ENCODE measurements at regions of chr5 and their contacts with region 1.

Region 1: DNA sequence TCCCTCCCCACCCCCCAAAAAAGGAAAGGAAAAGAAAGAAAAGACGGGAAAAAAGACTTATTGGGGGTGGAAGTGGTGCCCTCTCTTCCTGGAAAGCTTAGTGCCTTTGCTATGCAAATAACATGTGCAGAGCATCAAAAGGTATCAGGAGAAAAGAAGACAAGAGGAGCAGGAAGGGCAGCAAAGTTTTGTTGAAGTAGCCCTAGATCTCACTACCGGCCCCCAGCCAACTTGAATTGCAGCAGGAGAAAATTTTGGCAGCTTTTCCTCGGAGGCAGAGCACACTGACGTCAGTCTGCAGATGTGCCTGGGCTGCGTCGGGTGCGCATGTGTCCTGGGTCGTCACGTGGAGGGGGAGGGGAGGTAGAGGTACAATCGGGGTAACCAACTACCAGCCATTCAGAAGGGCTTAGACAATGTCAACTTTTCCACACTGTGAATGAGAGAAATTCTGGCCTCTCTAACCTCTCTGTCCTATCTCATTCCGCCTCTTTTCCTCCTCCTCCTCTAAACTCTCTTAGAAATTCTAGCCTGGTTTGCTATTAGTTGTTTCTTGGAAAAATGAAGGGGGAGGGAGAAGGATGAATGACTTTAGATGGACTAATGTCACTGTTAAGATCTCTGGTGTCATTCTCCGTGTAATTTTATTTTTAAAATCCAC is at the start of gene ADAMTS6:
- DNase-seq: peak; percentile 93 to 97 (median 96)
- H3K4me3 ChIP-seq: peak within 1 kb of the TSS; percentile 6 to 69 (median 48)
- H3K27ac ChIP-seq: peak within 1 kb of the TSS; percentile 81 to 94 (median 89)
- H3K4me1 ChIP-seq: peaks cover 5 to 26% of the 10 kb centered on the region in 2 donors
- H3K27me3 ChIP-seq: no peaks in the 10 kb centered on the region
- CTCF ChIP-seq: no peak
- POLR2A ChIP-seq: peak; percentile 8 to 88
- total RNA-seq, gene ADAMTS6: 0.54 to 11.9 (median 1.0) TPM

Region 2: DNA sequence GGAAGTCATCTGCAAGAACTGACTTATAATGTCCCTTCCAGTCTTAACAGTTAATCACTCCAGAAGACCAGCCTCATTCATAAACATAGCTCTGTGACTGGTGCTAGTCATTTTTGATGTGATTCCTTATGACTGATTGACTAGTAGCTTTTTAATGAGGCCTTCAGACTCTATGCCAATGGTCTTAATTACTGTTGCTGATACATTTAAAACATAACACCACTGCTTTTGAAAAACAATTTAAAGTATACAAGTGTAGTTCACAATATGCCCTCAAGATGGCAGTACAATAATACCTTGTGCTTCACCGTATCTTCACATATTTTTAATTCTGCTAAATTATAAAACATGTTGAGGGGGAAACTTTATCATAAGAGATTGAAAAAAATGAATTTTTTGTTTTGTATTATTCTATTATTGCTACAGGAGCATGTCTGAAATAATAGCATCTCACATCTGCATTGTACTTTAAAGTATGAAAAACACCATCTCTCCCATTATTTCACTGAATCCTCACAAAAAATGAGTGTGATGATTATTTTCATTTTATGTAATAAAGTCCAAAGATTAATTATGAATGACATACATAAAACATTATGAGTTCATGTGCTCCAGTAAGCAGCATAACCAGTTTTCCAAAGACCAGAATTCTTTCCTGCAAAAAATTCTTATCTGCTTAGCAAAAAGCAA is 846.6 kb before region 1 on chr5:
- intact Hi-C with region 1: loop called in 1 of 2 experiments (anchors 10 kb)
- DNase-seq: no peak
- H3K4me3 ChIP-seq: no peak overlapping the region
- H3K27ac ChIP-seq: no peak overlapping the region
- H3K4me1 ChIP-seq: no peaks in the 10 kb centered on the region
- H3K27me3 ChIP-seq: no peaks in the 10 kb centered on the region
- CTCF ChIP-seq: peak; percentile 68 to 91 (median 78)
- POLR2A ChIP-seq: no peak

Region 3: DNA sequence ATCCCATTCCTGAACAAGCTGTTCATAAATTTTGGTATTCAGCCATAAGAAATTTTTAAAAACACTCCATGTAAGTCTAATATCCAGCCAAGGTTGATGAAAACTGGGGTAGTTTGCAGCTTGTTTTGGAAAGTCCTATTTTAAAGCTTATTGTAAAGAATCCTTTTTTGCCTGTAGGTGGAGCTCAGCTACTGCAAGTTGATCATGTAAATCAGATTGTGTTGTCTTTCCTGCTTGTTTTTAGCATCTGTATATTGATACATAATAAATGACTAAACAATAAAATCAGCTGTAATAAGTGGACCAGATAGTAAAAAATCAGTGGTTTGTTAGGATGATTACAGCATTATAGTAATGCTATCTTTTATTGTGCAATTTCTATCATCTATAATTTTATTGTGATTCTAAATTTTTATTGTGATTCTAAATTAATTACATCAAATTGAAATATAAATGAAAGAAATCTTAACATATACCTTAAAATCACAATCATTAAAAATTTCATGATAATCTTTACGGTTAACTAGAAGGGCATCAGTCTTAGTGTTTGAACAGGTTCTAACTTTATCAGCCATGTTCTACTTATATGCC is 670.6 kb before region 1 on chr5:
- intact Hi-C with region 1: loop called in 1 of 2 experiments (anchors 5 kb)
- DNase-seq: peak in 3 of 7 donors; percentile 7 to 15 (median 8)
- H3K4me3 ChIP-seq: no peak overlapping the region
- H3K27ac ChIP-seq: no peak overlapping the region
- H3K4me1 ChIP-seq: no peaks in the 10 kb centered on the region
- H3K27me3 ChIP-seq: no peaks in the 10 kb centered on the region
- CTCF ChIP-seq: peak; percentile 51 to 78 (median 65)
- POLR2A ChIP-seq: no peak

Region 4: GRCh38 chr5:64958757-64959391 is 522.9 kb before region 1 on chr5:
- intact Hi-C with region 1: loop called (anchors 10 kb)
- DNase-seq: no peak
- H3K4me3 ChIP-seq: no peak overlapping the region
- H3K27ac ChIP-seq: no peak overlapping the region
- H3K4me1 ChIP-seq: no peaks in the 10 kb centered on the region
- H3K27me3 ChIP-seq: no peaks in the 10 kb centered on the region
- CTCF ChIP-seq: peak; percentile 42 to 65 (median 50)
- POLR2A ChIP-seq: no peak

Region 5: GRCh38 chr5:64965613-64966012 is 516.2 kb before region 1 on chr5:
- intact Hi-C with region 1: loop called in 1 of 2 experiments (anchors 10 kb)
- DNase-seq: no peak
- H3K4me3 ChIP-seq: no peak overlapping the region
- H3K27ac ChIP-seq: no peak overlapping the region
- H3K4me1 ChIP-seq: no peaks in the 10 kb centered on the region
- H3K27me3 ChIP-seq: no peaks in the 10 kb centered on the region
- CTCF ChIP-seq: no peak
- POLR2A ChIP-seq: no peak

Region 6: DNA sequence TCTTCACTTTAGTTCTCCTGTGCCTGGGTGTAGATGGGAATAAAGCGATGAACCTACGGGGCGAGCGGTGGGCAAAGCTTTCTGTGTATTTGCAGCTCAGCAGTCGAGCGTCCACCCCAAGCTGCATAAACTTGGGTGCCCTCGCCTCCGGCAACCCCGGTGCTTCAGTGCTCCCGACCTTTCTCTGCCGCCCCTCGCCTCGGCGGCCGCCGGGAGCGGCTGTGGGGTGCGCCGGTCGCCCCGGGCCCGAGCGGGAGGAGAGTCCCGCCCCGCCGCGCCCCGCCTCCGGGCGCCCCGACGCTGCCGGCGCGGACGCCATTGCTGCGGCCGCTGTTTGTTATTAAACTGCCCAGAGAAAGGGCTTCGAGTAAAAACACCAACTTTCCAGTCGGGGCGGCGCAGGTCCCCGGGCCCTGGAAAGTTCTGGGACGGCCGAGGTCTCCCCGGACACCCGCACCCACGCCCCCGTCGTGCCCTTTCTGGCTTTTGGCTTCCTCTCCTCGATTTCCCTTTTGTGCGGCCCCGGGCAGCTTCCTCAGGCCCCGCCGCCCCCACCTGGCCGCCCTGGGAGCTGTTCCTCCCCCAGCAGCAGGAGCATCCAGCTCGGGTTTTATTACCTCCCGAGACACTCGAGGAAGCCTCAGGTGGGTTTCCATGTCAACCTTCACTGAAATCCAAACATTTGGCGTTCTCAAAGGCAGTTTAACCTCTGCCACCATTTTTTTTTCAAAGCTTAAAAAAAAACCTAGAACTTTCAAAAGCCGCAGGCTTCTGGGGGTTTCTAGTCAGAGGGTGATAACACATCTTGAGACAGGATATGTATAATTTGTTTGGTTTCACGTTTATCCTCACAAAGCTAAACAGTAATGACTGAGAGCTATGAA is 378.7 kb before region 1 on chr5:
- intact Hi-C with region 1: loop called in 1 of 2 experiments (anchors 10 kb)
- DNase-seq: peak; percentile 58 to 78 (median 63)
- H3K4me3 ChIP-seq: peak overlapping the region in 3 of 4 donors; percentile 22 to 84 (median 49)
- H3K27ac ChIP-seq: peak overlapping the region in 3 of 5 donors; percentile 77 to 89 (median 79)
- H3K4me1 ChIP-seq: peaks cover 0 to 4% of the 10 kb centered on the region in 2 donors
- H3K27me3 ChIP-seq: no peaks in the 10 kb centered on the region
- CTCF ChIP-seq: peak in 5 of 6 experiments; percentile 4 to 47 (median 25)
- POLR2A ChIP-seq: peak; percentile 17 to 23

Region 7: DNA sequence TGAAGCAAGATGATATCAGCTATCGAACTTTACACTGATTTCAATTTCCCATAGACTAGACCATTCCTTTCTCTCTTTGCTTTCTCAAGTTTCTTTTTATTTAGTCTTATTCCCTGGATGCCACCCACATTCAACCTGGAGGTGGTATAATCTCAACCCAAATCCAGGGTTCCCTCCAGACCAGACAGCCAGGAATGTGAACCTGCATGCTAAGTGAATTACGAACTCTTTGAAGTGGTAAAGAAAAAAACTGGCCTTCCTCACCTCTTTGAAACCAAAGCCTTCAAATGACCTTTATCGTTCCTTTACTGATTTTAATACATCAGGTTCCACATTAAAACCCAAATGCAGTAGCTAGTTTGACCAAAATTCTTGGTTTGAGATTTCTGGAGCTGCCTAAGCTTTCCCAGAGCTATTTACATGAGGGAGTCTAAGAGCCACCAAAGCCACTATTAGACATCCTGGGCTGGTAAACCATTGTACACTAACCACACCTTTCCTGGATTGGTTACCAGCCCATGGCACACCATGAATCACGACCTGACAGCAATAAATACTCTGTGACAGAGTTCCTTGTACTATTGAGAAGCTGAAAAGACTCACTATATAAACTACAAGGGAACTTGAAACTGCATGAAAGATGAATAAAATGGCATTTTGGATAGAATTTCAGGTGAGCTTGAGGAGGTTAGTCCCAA is 323.7 kb before region 1 on chr5:
- intact Hi-C with region 1: no loop called
- DNase-seq: no peak
- H3K4me3 ChIP-seq: no peak overlapping the region
- H3K27ac ChIP-seq: no peak overlapping the region
- H3K4me1 ChIP-seq: no peaks in the 10 kb centered on the region
- H3K27me3 ChIP-seq: no peaks in the 10 kb centered on the region
- CTCF ChIP-seq: no peak
- POLR2A ChIP-seq: no peak

Measured in adrenal gland (tissue), 19 donors.